ENCODE measurements at regions of chr14 and their contacts with region 1.

Region 1: DNA sequence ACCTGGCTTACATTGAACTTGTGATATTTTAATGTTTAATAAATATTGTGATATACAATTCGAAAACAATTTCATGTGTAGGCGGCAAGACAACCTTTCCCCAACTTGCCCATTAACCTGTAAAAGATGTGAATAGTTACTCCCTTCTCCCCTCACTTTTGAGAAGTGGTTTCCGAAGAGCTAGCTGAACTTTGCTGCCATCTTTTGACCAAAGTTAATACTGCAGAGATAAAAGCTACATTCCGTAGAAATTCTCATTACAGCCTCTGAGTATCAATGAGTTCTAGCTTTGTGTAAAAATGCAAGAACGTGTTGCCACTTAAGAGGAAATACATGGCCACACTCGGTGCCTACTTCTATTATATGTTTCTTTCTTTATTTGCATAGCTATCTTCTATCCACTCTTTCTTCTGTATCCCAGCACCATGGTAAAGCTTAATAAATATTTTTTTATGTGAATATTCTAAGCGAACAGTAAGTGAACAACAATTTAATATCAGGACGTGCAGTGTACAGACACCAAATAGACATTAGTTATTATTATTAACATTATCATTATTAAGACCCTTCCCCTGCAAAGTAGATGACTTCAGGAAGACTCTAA is 105.1 kb upstream of the TMEM260 start:
- DNase-seq: peak in 4 of 14 experiments; percentile 8 to 64 (median 48)
- ATAC-seq: peak; percentile 48
- H3K4me3 ChIP-seq: no peak overlapping the region
- H3K4me3 Mint-ChIP-seq: no peak overlapping the region
- H3K27ac ChIP-seq: no peak overlapping the region
- H3K27ac Mint-ChIP-seq: no peak overlapping the region
- H3K4me1 ChIP-seq: no peaks in the 10 kb centered on the region
- H3K4me1 Mint-ChIP-seq: no peaks in the 10 kb centered on the region
- H3K27me3 ChIP-seq: no peaks in the 10 kb centered on the region
- H3K27me3 Mint-ChIP-seq: peaks cover 10% of the 10 kb centered on the region
- CTCF ChIP-seq: peak; percentile 75

Region 2: GRCh38 chr14:55212634-55213033 is 1261.9 kb before region 1 on chr14:
- CTCF ChIA-PET with region 1: no interaction called
- POLR2A ChIA-PET with region 1: no interaction called
- intact Hi-C with region 1: loop called in 1 of 2 experiments (anchors 10 kb)
- DNase-seq: no peak
- ATAC-seq: no peak
- H3K4me3 ChIP-seq: no peak overlapping the region
- H3K4me3 Mint-ChIP-seq: no peak overlapping the region
- H3K27ac ChIP-seq: no peak overlapping the region
- H3K27ac Mint-ChIP-seq: no peak overlapping the region
- H3K4me1 ChIP-seq: no peaks in the 10 kb centered on the region
- H3K4me1 Mint-ChIP-seq: peaks cover 5% of the 10 kb centered on the region
- H3K27me3 ChIP-seq: no peaks in the 10 kb centered on the region
- H3K27me3 Mint-ChIP-seq: no peaks in the 10 kb centered on the region
- CTCF ChIP-seq: no peak

Region 3: GRCh38 chr14:55446218-55446654 is 1028.3 kb before region 1 on chr14:
- CTCF ChIA-PET with region 1: interaction called, 8 read pairs
- POLR2A ChIA-PET with region 1: no interaction called
- intact Hi-C with region 1: loop called (anchors 2 kb)
- DNase-seq: peak; percentile 12 to 80 (median 36)
- ATAC-seq: no peak
- H3K4me3 ChIP-seq: no peak overlapping the region
- H3K4me3 Mint-ChIP-seq: no peak overlapping the region
- H3K27ac ChIP-seq: no peak overlapping the region
- H3K27ac Mint-ChIP-seq: no peak overlapping the region
- H3K4me1 ChIP-seq: no peaks in the 10 kb centered on the region
- H3K4me1 Mint-ChIP-seq: no peaks in the 10 kb centered on the region
- H3K27me3 ChIP-seq: no peaks in the 10 kb centered on the region
- H3K27me3 Mint-ChIP-seq: no peaks in the 10 kb centered on the region
- CTCF ChIP-seq: peak; percentile 68

Region 4: DNA sequence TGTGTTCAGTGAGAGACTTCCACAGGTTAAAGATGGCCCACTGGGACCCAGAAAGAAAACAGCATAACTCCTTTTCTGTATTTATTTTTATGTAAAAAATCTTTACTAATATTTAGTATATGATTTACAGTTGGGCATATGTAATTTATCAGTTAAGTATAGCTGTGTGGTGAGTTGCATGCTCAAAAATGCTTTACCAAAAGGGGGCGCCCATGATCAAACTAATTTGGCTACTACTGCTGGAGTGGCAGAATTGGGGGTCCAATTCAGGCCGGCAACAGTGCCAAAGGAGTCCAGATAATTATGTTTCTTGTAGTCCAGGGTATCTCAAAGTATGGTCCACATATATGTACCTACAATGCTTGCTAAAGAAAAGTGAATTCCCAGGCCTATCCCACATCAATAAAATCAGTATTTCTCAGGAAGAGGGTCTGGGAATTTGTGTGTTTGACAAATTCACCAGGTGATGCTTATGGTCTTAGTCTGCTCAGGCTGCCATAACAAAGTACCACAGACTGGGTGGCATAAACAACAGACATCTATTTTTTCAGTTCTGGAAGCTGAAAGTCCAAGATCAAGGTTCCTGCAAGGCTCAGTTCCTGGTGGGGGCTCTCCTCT is 742.5 kb before region 1 on chr14:
- CTCF ChIA-PET with region 1: interaction called, 8 read pairs
- POLR2A ChIA-PET with region 1: no interaction called
- intact Hi-C with region 1: loop called (anchors 1 kb)
- DNase-seq: peak; percentile 9 to 69 (median 44)
- ATAC-seq: no peak
- H3K4me3 ChIP-seq: no peak overlapping the region
- H3K4me3 Mint-ChIP-seq: no peak overlapping the region
- H3K27ac ChIP-seq: no peak overlapping the region
- H3K27ac Mint-ChIP-seq: no peak overlapping the region
- H3K4me1 ChIP-seq: no peaks in the 10 kb centered on the region
- H3K4me1 Mint-ChIP-seq: no peaks in the 10 kb centered on the region
- H3K27me3 ChIP-seq: no peaks in the 10 kb centered on the region
- H3K27me3 Mint-ChIP-seq: no peaks in the 10 kb centered on the region
- CTCF ChIP-seq: peak; percentile 54

Region 5: DNA sequence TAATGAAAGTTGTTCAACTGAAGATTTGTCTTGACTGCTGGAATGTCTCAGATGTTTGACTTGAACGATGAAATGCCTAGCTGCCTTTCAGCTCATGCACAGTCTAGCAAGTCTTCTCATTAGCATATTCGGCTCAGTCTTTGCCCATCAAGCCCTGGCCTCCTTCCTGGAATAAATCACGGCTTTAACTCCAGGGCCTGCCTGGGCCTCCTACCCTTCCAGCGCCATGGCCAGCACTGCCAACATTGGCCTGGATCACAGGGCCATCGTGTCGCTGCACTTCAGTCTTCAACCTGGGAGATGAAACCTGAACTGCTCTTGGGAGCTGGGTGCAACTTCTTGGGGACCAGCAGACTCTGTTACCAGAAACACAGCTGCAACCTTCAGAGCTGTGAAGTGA is 21.6 kb before region 1 on chr14:
- CTCF ChIA-PET with region 1: no interaction called
- POLR2A ChIA-PET with region 1: no interaction called
- intact Hi-C with region 1: no loop called
- DNase-seq: no peak
- ATAC-seq: no peak
- H3K4me3 ChIP-seq: no peak overlapping the region
- H3K4me3 Mint-ChIP-seq: no peak overlapping the region
- H3K27ac ChIP-seq: no peak overlapping the region
- H3K27ac Mint-ChIP-seq: no peak overlapping the region
- H3K4me1 ChIP-seq: no peaks in the 10 kb centered on the region
- H3K4me1 Mint-ChIP-seq: no peaks in the 10 kb centered on the region
- H3K27me3 ChIP-seq: peaks cover 2 to 9% of the 10 kb centered on the region in 2 experiments
- H3K27me3 Mint-ChIP-seq: peaks cover 70% of the 10 kb centered on the region
- CTCF ChIP-seq: no peak

Measured in CD4-positive, alpha-beta T cell (primary cell).